Activated T-helper 2 cell treated with anti-CD3 and anti-CD28 coated beads, Interferon-gamma antibody, Interleukin-2, Interleukin-4, amounts not matched to agents 10 μg/mL and 5 μg/mL and 100 μg/mL, durations not matched to agents 14 hours and 24 hours and 36 hours (primary cell): ENCODE measurements at regions of chr15 and their contacts with region 1.

Region 1: DNA sequence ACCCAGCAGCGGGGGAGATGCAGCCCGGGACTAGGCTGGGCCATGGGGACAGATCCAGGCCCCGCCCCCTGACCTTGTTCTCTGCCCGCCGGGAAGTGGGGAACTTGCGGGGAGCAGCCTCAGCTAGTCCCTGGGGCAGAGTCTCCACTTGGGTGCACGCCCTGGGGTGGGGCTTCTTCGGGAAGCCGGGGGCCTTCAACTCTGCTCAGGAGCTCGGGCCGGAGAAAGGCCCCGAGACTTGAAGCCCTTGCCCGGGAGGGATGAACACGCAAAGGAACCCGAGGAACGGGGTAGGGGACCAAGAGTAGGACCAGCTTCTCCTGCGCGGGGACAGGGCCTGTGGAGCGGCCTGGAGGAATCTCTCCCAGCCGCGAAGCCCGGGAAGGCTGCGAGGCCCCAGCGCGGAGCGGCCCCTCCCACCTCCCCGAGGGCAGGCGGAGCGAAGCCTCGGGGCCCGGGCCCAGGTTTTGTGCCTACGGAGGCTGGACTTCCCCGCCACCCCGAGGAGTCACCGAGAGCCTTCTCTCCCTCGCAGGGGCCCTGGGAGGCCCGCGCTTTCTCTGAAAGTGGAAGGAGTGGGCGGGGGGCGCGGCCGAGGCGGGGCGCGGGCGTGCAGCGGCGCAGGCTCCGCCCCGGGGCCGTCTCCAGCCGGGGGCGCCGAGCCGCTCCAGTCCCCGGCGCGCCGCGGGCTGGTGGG is at the start of gene ITPKA:
- DNase-seq: peak; percentile 74
- H3K4me3 Mint-ChIP-seq: peak within 1 kb of the TSS; percentile 80
- H3K27ac Mint-ChIP-seq: peak within 1 kb of the TSS; percentile 63
- H3K4me1 Mint-ChIP-seq: peaks cover 32% of the 10 kb centered on the region
- H3K27me3 Mint-ChIP-seq: peaks cover 21% of the 10 kb centered on the region
- total RNA-seq, gene ITPKA: 4.7 and 5.7 TPM in 2 replicates

Region 2: GRCh38 chr15:41013698-41014414 is 479.5 kb before region 1 on chr15:
- intact Hi-C with region 1: no loop called
- DNase-seq: no peak
- H3K4me3 Mint-ChIP-seq: no peak overlapping the region
- H3K27ac Mint-ChIP-seq: no peak overlapping the region
- H3K4me1 Mint-ChIP-seq: peaks cover 13% of the 10 kb centered on the region
- H3K27me3 Mint-ChIP-seq: no peaks in the 10 kb centered on the region

Region 3: GRCh38 chr15:41429003-41429890 is 64.1 kb before region 1 on chr15:
- intact Hi-C with region 1: loop called (anchors 1 kb)
- DNase-seq: peak; percentile 14
- H3K4me3 Mint-ChIP-seq: peak overlapping the region; percentile 55
- H3K27ac Mint-ChIP-seq: peak overlapping the region; percentile 94
- H3K4me1 Mint-ChIP-seq: peaks cover 23% of the 10 kb centered on the region
- H3K27me3 Mint-ChIP-seq: no peaks in the 10 kb centered on the region

Region 4: GRCh38 chr15:41557673-41558399 is 64.5 kb after region 1 on chr15:
- intact Hi-C with region 1: loop called (anchors 1 kb)
- DNase-seq: peak; percentile 62
- H3K4me3 Mint-ChIP-seq: peak overlapping the region; percentile 83
- H3K27ac Mint-ChIP-seq: peak overlapping the region; percentile 71
- H3K4me1 Mint-ChIP-seq: peaks cover 20% of the 10 kb centered on the region
- H3K27me3 Mint-ChIP-seq: peaks cover 42% of the 10 kb centered on the region

Region 5: DNA sequence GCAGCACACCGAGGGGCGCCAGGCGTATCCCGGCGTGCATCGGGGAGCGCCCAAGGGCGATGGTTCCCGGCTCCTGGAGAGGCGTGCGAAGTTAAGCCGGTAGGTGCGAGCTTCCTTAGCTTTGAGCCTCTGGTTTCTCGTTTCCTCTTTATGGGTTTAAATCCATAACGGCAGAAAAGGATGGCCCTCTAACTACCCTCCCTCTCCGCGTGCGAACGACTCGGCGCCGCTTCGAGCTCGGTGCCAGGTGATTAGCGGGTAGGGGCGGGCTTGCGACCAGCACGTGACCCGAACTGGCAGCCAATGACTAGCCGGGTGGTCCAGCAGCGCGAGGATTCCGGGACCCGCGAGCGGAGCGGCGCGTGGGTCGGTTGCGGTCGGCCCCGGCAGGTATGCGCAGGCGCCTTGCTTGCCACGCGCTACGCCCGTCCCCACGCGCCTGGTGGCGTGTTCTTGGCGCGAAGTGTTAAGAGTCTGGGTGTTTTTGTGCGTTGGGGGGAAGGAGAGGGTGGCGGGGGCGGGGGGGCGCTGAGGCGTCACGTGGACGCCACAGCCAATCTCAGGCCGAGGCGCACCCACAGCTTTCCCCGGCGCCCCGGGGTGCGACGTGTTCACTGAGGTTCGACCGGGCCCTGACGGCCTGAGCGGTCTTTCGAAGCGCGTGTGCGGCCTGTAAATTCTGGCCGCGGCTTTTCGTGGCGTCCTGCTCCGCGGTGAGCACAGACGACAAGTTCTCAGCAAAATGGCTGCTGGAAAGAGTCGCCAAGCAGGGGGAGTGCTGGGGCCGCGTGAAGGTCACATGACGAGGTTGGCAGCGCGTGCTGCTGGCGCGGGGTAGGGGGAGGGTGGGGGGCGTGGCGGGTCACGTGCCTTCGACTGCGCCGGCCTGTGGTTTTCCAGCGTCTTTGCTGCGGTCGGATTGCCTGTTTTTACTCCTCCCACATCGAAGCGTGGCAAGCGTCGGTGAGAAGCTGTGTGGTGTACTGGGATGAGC is 128.1 kb after region 1 on chr15:
- intact Hi-C with region 1: no loop called
- DNase-seq: peak; percentile 71
- H3K4me3 Mint-ChIP-seq: peak overlapping the region; percentile 76
- H3K27ac Mint-ChIP-seq: peak overlapping the region; percentile 74
- H3K4me1 Mint-ChIP-seq: peaks cover 8% of the 10 kb centered on the region
- H3K27me3 Mint-ChIP-seq: peaks cover 13% of the 10 kb centered on the region

Region 6: GRCh38 chr15:41936649-41937567 is 443.6 kb after region 1 on chr15:
- intact Hi-C with region 1: loop called (anchors 5 kb)
- DNase-seq: peak; percentile 71
- H3K4me3 Mint-ChIP-seq: peak overlapping the region; percentile 69
- H3K27ac Mint-ChIP-seq: peak overlapping the region; percentile 100
- H3K4me1 Mint-ChIP-seq: peaks cover 60% of the 10 kb centered on the region
- H3K27me3 Mint-ChIP-seq: no peaks in the 10 kb centered on the region

Region 7: DNA sequence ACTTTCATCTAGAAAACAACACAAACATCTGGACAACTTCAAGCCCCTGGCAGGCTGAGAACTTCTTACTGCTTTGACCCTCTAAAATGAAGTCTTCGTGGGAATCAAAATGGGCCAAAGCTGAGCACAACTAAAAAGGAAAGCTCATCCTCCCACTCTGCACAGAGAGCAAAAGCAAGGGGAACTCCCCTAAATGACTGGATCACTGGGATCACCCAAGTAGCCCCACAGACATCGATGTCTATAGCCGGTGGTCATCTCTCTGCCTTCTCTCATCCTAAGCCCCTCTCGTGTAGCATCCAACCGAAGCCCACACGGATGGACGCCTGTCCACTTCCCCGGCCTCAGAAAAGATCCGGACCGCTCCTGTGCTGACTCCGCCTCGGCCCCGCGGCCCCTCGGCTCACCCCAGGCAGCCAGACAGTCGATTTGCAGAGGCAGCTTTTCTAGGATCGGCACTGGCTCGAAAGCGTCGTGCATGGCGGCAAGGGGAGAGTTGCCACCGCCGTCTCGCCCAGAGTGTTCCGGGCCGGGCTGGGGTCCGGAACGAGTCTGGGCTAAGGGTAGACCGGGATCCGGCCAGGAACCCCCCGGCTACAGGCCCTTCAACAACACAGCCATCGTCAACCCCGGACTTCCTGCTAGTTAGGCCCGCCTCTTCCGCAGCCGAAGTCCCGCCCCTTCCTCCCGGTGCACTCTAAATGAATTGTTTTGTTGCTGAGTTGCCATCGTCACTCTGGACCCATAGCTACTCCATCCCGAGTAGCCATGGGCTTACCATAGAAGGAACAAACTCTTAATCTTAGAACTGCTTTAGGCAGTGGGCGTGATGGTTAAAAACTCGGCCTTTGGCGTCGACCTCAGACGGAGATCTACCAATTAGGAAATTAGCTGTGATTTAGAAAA is 714.6 kb after region 1 on chr15 and contains the start of gene VPS39:
- intact Hi-C with region 1: loop called (anchors 5 kb)
- DNase-seq: peak; percentile 81
- H3K4me3 Mint-ChIP-seq: peak within 1 kb of the TSS; percentile 98
- H3K27ac Mint-ChIP-seq: peak within 1 kb of the TSS; percentile 98
- H3K4me1 Mint-ChIP-seq: peaks cover 29% of the 10 kb centered on the region
- H3K27me3 Mint-ChIP-seq: no peaks in the 10 kb centered on the region
- total RNA-seq, gene VPS39: 67.7 and 70.6 TPM in 2 replicates